ENCODE measurements at regions of chr12 and their contacts with region 1.

Region 1: DNA sequence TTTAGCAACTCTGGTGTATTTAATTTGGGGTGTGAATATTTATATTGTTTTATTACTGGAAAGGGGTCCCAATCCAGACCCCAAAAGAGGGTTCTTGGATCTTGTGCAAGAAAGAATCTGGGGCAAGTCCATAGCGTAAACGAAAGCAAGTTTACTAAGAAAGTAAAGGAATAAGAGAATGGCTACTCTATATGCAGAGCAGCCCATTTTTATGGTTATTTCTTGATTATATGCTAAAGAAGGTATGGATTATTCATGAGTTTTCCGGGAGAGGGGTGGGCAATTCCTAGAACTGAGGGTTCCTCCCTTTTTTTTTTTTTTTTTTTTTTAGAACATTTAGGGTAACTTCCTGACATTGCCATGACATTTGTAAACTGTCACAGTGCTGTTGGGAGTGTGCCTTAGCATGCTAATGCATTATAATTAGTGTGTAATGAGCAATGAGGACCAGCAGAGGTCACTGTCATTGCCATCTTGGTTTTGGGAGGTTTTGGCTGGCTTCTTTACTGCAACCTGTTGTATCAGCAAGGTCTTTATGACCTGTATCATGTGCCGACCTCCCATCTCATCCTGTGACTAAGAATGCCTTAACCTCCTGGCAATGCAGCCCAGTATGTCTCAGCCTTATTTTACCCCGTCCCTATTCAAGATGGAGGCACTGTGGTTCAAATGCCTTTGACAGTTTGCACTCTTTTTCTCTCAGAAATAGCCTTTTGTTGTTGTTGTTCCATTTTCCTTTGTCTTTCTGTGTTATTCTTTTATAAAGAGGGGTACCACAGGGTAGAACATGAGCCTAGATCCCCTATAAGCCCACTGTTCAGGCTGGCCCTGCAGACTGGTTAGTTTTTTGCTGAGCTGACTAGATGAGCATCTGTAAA is 75.5 kb upstream of the DCD start:
- DNase-seq: peak; percentile 44
- ATAC-seq: peak; percentile 75
- H3K4me3 Mint-ChIP-seq: no peak overlapping the region
- H3K27ac Mint-ChIP-seq: no peak overlapping the region
- H3K4me1 Mint-ChIP-seq: peaks cover 5% of the 10 kb centered on the region
- H3K27me3 Mint-ChIP-seq: peaks cover 1% of the 10 kb centered on the region
- CTCF ChIP-seq: peak; percentile 56

Region 2: DNA sequence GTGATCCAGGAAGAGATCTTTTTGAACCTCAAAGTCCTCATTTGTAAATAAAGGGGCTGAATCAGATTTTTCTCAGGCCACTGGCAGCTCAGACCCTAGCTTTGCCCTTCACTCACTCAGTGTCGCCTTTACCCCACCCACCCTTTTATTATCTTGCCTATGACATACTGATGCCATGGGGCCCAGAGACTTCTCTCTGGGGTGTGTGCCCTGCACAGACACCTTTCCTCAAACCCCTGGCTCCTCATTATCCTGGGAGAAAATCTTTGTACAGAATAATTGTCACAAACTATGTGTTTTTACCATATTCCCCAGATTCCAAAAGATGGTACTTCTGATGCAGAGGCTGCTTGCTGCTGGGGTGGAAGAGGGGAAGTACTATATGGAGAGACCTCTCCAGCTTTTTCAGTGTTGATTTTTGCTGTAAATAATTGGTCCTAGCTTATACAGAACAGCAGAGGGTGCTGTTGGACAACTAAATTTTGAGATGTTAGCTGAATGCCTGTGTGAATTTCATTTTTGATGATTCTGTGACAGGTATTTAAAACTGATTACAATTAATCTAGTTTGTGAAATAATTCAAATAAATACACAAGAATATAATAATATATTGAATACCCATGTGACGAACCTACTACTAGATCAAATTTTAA is 21.6 kb before region 1 on chr12:
- CTCF ChIA-PET with region 1: interaction called, 13 read pairs
- POLR2A ChIA-PET with region 1: no interaction called
- intact Hi-C with region 1: no loop called
- DNase-seq: peak; percentile 24
- ATAC-seq: peak; percentile 47
- H3K4me3 Mint-ChIP-seq: no peak overlapping the region
- H3K27ac Mint-ChIP-seq: no peak overlapping the region
- H3K4me1 Mint-ChIP-seq: no peaks in the 10 kb centered on the region
- H3K27me3 Mint-ChIP-seq: peaks cover 4% of the 10 kb centered on the region
- CTCF ChIP-seq: peak; percentile 73

Region 3: DNA sequence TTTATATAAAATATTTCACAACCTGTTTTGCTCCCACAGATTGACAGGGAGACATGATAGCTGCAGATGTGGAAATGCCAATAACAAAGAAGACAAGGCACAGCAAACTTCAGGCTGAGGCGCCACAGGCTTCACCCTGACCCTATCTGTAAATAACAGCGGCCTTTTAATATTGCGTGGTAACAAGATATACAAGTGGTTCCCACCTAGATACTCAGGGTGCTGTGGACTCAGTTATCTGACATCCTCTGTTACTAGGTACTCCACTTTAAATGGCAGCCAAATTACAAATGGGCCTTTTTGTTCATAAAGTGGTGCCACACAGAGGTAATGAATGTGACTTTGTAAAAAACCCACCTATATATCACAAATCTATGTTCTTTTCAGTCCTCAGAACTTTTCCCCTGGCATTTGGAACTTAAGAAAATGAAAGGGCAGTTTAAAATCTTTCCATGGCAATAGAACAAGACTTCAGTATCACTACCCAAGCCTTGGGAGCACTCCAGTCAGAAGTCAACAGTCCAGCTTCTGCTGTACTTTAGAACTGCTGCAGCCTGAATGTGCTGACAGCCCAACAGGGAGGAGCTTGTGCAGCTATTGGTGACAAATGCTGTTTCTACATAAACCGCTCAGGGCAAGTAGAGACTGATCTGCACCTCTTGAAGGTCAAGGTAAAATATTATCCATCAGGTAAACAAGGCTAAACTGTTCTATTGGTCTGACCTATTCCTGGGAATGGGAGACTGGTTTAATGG is 10.8 kb after region 1 on chr12:
- CTCF ChIA-PET with region 1: interaction called, 18 read pairs
- POLR2A ChIA-PET with region 1: interaction called, 3 read pairs
- intact Hi-C with region 1: no loop called
- DNase-seq: no peak
- ATAC-seq: no peak
- H3K4me3 Mint-ChIP-seq: no peak overlapping the region
- H3K27ac Mint-ChIP-seq: no peak overlapping the region
- H3K4me1 Mint-ChIP-seq: peaks cover 15% of the 10 kb centered on the region
- H3K27me3 Mint-ChIP-seq: no peaks in the 10 kb centered on the region
- CTCF ChIP-seq: no peak

Region 4: GRCh38 chr12:54740882-54741281 is 17.3 kb after region 1 on chr12:
- CTCF ChIA-PET with region 1: interaction called, 18 read pairs
- POLR2A ChIA-PET with region 1: no interaction called
- intact Hi-C with region 1: no loop called
- DNase-seq: no peak
- ATAC-seq: no peak
- H3K4me3 Mint-ChIP-seq: no peak overlapping the region
- H3K27ac Mint-ChIP-seq: peak overlapping the region; percentile 3
- H3K4me1 Mint-ChIP-seq: peaks cover 60% of the 10 kb centered on the region
- H3K27me3 Mint-ChIP-seq: no peaks in the 10 kb centered on the region
- CTCF ChIP-seq: no peak

Measured in activated CD8-positive, alpha-beta T cell treated with anti-CD3 and anti-CD28 coated beads for 36 hours (primary cell).